HEK293 (cell line): ENCODE measurements at regions of chr15 and their contacts with region 1.

Region 1: DNA sequence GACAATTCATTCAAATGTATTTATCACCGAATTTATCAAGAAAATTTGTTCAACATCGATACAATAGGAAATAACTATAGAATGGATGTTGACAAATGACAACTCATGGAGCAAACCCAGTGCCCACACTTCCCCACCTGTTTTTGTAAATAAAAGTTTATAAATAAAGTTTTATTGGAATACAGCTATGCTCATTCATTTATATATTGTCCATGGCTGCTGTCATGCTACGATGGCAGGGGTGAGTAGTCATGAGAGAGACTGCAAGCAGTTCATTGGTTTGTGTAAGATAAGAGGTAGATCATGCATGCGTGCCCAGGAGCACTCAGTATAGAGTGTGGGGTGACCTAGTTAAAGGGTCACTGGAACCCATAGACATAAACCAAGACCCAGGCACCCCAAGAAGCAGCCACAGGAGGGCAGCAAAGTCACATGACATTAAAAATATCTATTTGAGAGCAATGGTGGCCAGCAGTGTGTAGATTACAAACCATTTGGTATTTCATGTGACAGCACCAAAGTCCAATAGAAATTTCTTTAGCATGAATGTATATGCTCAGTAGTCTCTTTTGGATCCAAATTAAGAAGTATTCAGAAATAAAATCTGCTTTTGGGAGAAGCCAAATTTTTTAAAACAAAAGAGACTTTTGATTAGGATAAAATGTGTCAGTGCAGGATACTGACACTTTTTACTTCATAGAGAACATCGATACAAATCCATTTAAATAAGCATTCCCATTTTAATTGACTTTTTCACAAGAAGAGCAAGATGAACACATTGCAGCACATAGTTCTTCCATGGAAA is 794.8 kb downstream of the MCTP2 start:
- H3K4me3 ChIP-seq: no peak overlapping the region
- H3K27ac ChIP-seq: no peak overlapping the region
- H3K4me1 ChIP-seq: no peaks in the 10 kb centered on the region
- CTCF ChIP-seq: no peak

Region 2: GRCh38 chr15:94670438-94671034 is 355.6 kb before region 1 on chr15:
- CTCF ChIA-PET with region 1: interaction called, 44 read pairs
- POLR2A ChIA-PET with region 1: no interaction called
- H3K4me3 ChIP-seq: no peak overlapping the region
- H3K27ac ChIP-seq: no peak overlapping the region
- H3K4me1 ChIP-seq: peaks cover 10% of the 10 kb centered on the region
- CTCF ChIP-seq: no peak

Region 3: GRCh38 chr15:95169541-95170459 is 143.7 kb after region 1 on chr15:
- CTCF ChIA-PET with region 1: no interaction called
- POLR2A ChIA-PET with region 1: no interaction called
- H3K4me3 ChIP-seq: no peak overlapping the region
- H3K27ac ChIP-seq: peak overlapping the region; percentile 42; the same call in 1 of the 2 replicates
- H3K4me1 ChIP-seq: peaks cover 19% of the 10 kb centered on the region
- CTCF ChIP-seq: no peak

Region 4: DNA sequence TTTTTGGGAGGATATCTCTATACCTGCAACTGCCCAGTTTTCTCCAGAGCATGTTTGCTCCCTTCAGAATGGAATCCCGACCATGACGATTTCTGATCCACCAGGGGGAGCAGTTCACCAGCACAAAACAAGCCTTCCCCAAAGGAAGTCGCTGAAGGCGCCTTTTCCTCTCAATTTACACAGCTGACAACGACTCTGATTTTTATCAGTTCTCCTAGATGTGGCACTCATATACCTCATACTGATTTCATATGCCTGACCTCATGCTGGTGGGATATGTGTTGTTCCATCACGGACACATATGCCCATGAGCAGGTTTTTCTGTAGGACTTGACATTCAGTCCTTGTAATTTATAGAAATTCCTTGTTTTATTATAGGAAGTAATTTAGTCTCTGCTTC is 233.4 kb after region 1 on chr15:
- CTCF ChIA-PET with region 1: interaction called, 12 read pairs
- POLR2A ChIA-PET with region 1: no interaction called
- H3K4me3 ChIP-seq: no peak overlapping the region
- H3K27ac ChIP-seq: no peak overlapping the region; the same call in 1 of the 2 replicates
- H3K4me1 ChIP-seq: 0 out of 2 replicates have a peak, but pooled peaks cover 4% of the 10 kb centered on the region
- CTCF ChIP-seq: peak; percentile 80